GM12878 (cell line): ENCODE measurements at regions of chr15 and their contacts with region 1.

Region 1: DNA sequence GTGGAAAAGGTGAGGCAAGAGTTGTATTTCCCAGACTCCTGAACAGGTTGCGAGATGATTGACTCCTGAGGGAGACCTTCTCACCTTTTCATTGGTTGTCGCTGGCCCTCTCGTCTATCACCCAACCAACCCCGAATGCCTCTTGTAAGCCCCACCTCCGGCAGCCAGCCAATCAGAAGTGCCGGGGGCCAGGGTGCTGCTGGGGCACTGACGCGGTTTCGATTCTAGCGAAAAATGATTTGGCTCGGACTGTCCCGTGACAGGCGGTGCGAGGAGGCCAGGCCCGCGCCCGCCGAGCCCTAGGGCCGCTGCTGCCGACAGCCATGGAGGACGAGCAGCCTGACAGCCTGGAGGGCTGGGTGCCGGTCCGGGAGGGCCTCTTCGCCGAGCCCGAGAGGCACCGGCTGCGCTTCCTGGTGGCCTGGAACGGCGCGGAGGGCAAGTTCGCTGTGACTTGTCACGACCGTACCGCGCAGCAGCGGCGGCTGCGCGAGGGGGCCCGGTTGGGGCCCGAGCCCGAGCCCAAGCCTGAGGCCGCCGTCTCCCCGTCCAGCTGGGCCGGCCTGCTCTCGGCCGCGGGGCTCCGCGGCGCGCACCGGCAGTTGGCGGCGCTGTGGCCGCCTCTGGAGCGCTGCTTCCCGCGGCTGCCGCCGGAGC is at the start of gene WHAMM:
- DNase-seq: peak; percentile 88
- ATAC-seq: peak; percentile 93
- H3K4me3 ChIP-seq: peak within 1 kb of the TSS; percentile 77
- H3K27ac ChIP-seq: peak within 1 kb of the TSS; percentile 94
- H3K4me1 ChIP-seq: peaks cover 32% of the 10 kb centered on the region
- H3K27me3 ChIP-seq: no peaks in the 10 kb centered on the region
- CTCF ChIP-seq: peak in 1 of 3 experiments; percentile 14; a peak in 1 of 6 replicates
- EP300 ChIP-seq: 0 out of 4 replicates have a peak, but pooled peaks of 1 of the 2 experiments have one; percentile 14
- POLR2A ChIP-seq: peak; percentile 95
- RAD21 ChIP-seq: no peak
- polyA plus RNA-seq, gene WHAMM: 1.7 to 1.8 TPM

Region 2: DNA sequence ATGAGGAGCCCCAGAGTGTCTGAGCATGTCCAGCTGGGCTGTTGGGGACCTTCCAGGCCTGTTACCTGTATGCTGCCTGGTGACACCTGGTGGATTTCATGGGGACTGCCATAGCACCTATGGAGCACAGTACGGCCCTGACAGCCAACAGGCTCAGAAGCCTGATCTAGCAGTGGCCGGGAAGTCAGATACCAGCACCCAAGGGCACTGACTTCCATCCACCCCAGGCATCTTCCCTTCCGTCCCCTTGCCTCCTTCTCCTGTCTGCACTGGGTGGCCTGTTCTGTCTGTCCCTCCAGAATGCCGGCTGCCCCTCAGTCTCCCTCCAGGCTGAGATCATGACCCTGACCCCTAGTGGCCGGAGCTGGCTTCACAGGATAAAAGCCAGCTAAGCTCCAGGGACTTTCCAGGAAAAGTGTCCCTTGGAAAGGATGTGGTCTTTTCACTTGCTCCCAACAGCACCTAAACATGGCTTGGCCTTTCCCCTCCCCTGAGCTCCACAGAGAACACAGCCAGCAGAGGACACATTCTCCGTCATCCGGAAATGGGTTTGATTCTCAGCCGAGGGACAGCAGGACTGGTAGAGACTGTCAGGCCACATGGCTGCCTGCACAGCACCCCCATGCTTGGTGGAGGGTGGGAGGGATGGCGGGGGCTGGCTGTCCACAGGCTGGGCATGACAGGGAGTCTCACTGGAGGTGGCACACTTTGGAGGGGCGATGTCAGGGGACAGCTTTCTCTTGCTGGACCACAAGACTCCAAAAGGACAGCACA is 278.7 kb before region 1 on chr15:
- CTCF ChIA-PET with region 1: interaction called, 11 read pairs
- POLR2A ChIA-PET with region 1: no interaction called
- RAD21 ChIA-PET with region 1: no interaction called
- SMC1A ChIA-PET with region 1: interaction called, 5 read pairs
- in situ Hi-C with region 1: no loop called
- intact Hi-C with region 1: no loop called
- DNase-seq: peak; percentile 55
- ATAC-seq: peak; percentile 82
- H3K4me3 ChIP-seq: peak overlapping the region; percentile 5; the same call in 1 of the 2 replicates
- H3K27ac ChIP-seq: peak overlapping the region; percentile 47
- H3K4me1 ChIP-seq: peaks cover 8% of the 10 kb centered on the region
- H3K27me3 ChIP-seq: no peaks in the 10 kb centered on the region
- CTCF ChIP-seq: peak; percentile 62 to 84 (median 80)
- EP300 ChIP-seq: 0 out of 4 replicates have a peak, but pooled peaks of 1 of the 2 experiments have one; percentile 12
- POLR2A ChIP-seq: no peak
- RAD21 ChIP-seq: peak; percentile 28; the same call in 1 of the 2 replicates

Region 3: DNA sequence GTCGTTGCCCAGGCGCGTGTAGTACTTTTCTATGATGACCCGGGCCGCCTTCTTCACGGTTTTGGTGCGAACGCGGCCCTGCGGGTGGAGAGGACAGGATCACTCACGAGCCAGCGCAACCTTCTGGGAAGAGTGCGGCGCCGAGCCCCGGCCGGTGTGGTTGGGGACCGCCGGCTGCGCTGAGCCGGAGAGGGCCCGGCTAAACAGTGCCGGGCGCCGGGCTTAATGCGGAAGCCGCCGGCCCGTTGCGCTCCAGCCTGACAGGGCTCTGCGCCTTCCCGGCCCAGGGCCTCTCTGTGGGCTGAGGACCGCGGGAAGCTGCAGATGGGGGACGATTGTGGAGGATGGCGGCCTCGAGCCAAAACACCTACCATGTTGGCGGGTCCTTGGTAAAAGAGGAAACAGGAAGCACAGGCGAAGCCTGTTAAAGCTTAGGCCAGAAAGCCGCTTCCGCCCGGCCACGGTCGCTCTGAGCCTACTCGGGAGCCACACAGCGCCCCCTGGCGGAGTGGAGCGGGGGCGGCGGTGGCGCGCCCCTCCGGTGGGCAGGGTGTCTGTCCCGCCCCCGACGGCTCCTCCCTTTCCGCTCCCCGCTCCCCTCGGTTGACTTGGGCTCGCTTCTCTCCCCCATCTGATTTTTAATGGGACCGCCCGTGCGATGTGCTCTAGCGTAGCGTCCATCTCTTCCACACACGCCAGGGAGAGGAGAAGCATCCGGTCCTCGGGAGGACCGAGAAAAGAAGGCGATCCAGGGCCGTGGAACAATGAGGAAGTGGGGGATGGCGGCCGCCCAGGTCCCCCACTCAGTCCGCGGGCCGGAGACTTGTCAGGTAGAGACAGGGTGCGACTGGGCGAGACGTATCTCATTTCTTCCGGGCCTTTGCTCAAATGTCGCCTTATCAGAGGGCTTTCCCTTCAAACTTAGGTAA is 269.2 kb before region 1 on chr15 and contains the start of gene RPS17:
- CTCF ChIA-PET with region 1: interaction called, 5 read pairs
- POLR2A ChIA-PET with region 1: interaction called, 3 read pairs
- RAD21 ChIA-PET with region 1: no interaction called
- SMC1A ChIA-PET with region 1: no interaction called
- in situ Hi-C with region 1: loop called (anchors 10 kb)
- intact Hi-C with region 1: no loop called
- DNase-seq: peak; percentile 85
- ATAC-seq: peak; percentile 95
- H3K4me3 ChIP-seq: peak within 1 kb of the TSS; percentile 99
- H3K27ac ChIP-seq: peak within 1 kb of the TSS; percentile 91
- H3K4me1 ChIP-seq: 0 out of 2 replicates have a peak, but pooled peaks cover 2% of the 10 kb centered on the region
- H3K27me3 ChIP-seq: no peaks in the 10 kb centered on the region
- CTCF ChIP-seq: peak; percentile 97 to 100 (median 97); a peak in 5 of 6 replicates
- EP300 ChIP-seq: peak; percentile 30 to 52; a peak in 2 of 4 replicates
- POLR2A ChIP-seq: peak; percentile 100
- RAD21 ChIP-seq: peak; percentile 14; the same call in 1 of the 2 replicates
- polyA plus RNA-seq, gene RPS17: 2,736 to 3,665 TPM

Region 4: DNA sequence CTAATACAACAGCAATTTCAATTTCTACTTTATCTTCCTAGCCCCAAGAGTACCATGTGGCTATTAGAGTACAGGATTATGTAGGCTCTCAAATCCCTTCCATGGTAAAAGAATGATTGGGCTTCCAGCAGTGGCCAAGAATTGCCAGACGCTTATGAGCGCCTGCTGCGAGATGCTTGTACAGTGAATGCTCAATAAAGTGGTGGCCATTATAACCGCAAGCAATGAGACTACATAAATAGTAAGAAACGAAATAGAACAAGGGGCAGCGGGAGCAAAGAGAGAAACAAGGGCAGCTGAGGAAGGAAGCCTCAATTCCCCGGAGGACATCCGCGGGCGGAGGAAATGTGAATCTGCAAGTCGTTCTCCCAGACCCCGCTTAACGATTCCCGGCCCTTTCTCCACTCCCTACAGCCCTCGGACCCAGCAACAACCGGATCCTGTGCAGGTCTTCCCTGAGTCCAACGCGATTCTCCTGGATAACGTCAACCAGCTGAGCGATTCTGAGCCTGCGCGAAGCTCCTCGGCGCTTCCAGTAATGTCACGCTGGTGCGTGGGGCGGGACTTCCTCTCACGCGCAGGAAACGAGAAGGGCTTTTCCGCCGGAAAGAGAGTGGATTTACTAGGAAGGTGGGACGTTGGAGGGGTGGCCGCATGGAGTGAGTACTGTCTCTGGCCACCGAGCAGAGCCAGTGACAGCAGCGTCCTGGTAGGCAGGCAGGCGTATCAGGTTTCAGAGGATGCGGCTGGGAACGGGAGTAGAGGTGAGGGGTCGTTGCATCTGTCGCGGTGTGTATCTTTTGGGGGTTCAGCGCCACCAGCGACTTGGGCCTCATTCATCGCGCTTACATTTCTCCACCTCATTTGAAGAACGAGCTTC is 59.3 kb before region 1 on chr15:
- CTCF ChIA-PET with region 1: interaction called, 12 read pairs
- POLR2A ChIA-PET with region 1: interaction called, 10 read pairs
- RAD21 ChIA-PET with region 1: interaction called, 20 read pairs
- SMC1A ChIA-PET with region 1: interaction called, 39 read pairs
- in situ Hi-C with region 1: no loop called
- intact Hi-C with region 1: loop called (anchors 1 kb)
- DNase-seq: peak; percentile 57
- ATAC-seq: peak; percentile 96
- H3K4me3 ChIP-seq: peak overlapping the region; percentile 87
- H3K27ac ChIP-seq: peak overlapping the region; percentile 90
- H3K4me1 ChIP-seq: peaks cover 7% of the 10 kb centered on the region; the same call in 1 of the 2 replicates
- H3K27me3 ChIP-seq: no peaks in the 10 kb centered on the region
- CTCF ChIP-seq: no peak
- EP300 ChIP-seq: 0 out of 4 replicates have a peak, but pooled peaks have one; percentile 15 to 17
- POLR2A ChIP-seq: peak; percentile 96
- RAD21 ChIP-seq: no peak

Region 5: GRCh38 chr15:82832601-82833361 is 23.2 kb after region 1 on chr15:
- CTCF ChIA-PET with region 1: interaction called, 10 read pairs
- POLR2A ChIA-PET with region 1: interaction called, 20 read pairs
- RAD21 ChIA-PET with region 1: interaction called, 19 read pairs
- SMC1A ChIA-PET with region 1: interaction called, 15 read pairs
- in situ Hi-C with region 1: no loop called
- intact Hi-C with region 1: loop called (anchors 1 kb)
- DNase-seq: peak; percentile 53
- ATAC-seq: peak; percentile 90
- H3K4me3 ChIP-seq: 0 out of 2 replicates have a peak overlapping the region, but pooled peaks have one; percentile 28
- H3K27ac ChIP-seq: peak overlapping the region; percentile 30
- H3K4me1 ChIP-seq: peaks cover 18% of the 10 kb centered on the region
- H3K27me3 ChIP-seq: no peaks in the 10 kb centered on the region
- CTCF ChIP-seq: no peak
- EP300 ChIP-seq: peak in 1 of 2 experiments; percentile 65; a peak in 2 of 4 replicates
- POLR2A ChIP-seq: no peak
- RAD21 ChIP-seq: no peak

Region 6: DNA sequence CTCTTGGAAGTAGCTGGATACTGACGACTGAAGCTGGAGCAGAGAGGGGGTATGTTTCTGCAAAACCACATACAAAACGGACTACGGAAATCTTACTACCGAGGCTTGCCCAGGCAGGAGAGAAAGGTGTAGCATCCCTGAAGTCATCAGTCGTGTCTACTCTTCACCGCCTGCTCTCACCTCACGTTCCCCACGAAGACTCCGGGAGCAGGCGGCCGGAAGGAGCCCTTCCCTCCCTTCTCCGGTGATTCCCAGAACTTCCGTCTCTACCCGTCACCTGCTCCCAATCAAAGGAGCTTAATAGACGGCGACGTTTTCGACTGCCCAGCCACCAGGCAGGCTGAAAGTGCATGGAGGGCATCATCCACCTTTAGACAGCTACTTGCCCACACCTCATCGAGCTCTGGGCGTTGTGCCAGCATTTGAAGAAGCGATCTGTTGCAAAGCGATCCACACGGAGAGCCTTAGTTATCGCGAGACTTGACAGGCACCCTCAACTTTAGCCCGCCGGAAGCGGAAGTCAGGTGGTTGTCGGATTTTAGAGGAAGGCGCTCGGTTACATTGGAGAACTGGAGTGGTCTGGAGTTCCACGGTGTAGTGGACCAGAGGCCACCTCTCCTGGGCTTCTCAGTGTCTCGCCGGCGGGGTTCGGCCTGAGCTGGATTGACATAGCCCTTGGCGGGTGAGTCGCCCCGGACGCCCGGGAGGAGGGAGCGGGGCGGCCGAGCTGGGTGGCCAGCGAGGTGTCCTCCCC is 176.3 kb after region 1 on chr15 and contains the start of gene RAMAC:
- CTCF ChIA-PET with region 1: no interaction called
- POLR2A ChIA-PET with region 1: interaction called, 8 read pairs
- RAD21 ChIA-PET with region 1: interaction called, 9 read pairs
- SMC1A ChIA-PET with region 1: interaction called, 4 read pairs
- in situ Hi-C with region 1: no loop called
- intact Hi-C with region 1: loop called (anchors 5 kb)
- DNase-seq: peak; percentile 93
- ATAC-seq: peak; percentile 97
- H3K4me3 ChIP-seq: peak within 1 kb of the TSS; percentile 84
- H3K27ac ChIP-seq: peak within 1 kb of the TSS; percentile 71
- H3K4me1 ChIP-seq: peaks cover 8% of the 10 kb centered on the region
- H3K27me3 ChIP-seq: no peaks in the 10 kb centered on the region
- CTCF ChIP-seq: no peak
- EP300 ChIP-seq: no peak
- POLR2A ChIP-seq: peak; percentile 88
- RAD21 ChIP-seq: no peak
- polyA plus RNA-seq, gene RAMAC: 79.3 to 109 TPM

Region 7: GRCh38 chr15:83207622-83208411 is 398.3 kb after region 1 on chr15 and contains the start of gene HDGFL3:
- CTCF ChIA-PET with region 1: no interaction called
- POLR2A ChIA-PET with region 1: interaction called, 5 read pairs
- RAD21 ChIA-PET with region 1: no interaction called
- SMC1A ChIA-PET with region 1: no interaction called
- in situ Hi-C with region 1: no loop called
- intact Hi-C with region 1: loop called (anchors 10 kb)
- DNase-seq: no peak
- ATAC-seq: peak; percentile 64
- H3K4me3 ChIP-seq: peak within 1 kb of the TSS; percentile 94
- H3K27ac ChIP-seq: peak within 1 kb of the TSS; percentile 80
- H3K4me1 ChIP-seq: peaks cover 6% of the 10 kb centered on the region; the same call in 1 of the 2 replicates
- H3K27me3 ChIP-seq: no peaks in the 10 kb centered on the region
- CTCF ChIP-seq: peak; percentile 44 to 49 (median 46); a peak in 5 of 6 replicates
- EP300 ChIP-seq: no peak
- POLR2A ChIP-seq: peak; percentile 79
- RAD21 ChIP-seq: peak; percentile 53
- polyA plus RNA-seq, gene HDGFL3: 5.6 to 6.6 TPM